ENCODE measurements at regions of chr7 and their contacts with region 1.

Region 1: DNA sequence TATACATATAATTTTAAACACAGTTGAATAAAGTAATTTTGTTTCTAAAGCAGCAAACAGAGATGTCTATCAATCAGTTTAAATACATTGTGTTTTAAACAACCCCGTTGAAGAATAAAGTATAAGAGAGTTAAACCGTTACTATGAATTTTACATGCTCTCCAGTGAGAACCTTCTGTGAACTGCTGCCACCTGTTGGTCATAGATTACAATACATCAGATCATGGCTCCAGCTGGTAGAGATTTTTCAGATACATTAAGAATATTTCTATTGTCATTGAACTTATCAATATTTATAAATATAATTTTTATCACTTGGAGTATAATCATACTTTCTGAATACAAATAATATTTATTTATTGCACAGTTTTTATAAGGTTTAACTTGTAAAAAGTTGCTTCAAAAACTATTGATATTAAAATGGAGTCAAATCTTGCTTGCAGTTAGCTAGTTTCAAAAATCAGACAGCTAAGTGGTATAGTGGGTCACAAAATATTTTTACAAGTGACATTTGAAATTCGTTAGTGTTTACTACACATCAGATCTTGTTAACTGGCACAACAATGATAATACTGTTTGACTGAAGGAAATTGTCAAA is 561.2 kb upstream of the PHF14 start:
- DNase-seq: peak; percentile 16
- ATAC-seq: peak; percentile 54; the same call in 1 of the 2 replicates
- H3K4me3 ChIP-seq: no peak overlapping the region
- H3K27ac ChIP-seq: no peak overlapping the region
- H3K4me1 ChIP-seq: no peaks in the 10 kb centered on the region
- H3K27me3 ChIP-seq: no peaks in the 10 kb centered on the region
- CTCF ChIP-seq: peak; percentile 20 to 54 (median 51); a peak in 4 of 6 replicates
- POLR2A ChIP-seq: no peak
- RAD21 ChIP-seq: peak; percentile 53

Region 2: DNA sequence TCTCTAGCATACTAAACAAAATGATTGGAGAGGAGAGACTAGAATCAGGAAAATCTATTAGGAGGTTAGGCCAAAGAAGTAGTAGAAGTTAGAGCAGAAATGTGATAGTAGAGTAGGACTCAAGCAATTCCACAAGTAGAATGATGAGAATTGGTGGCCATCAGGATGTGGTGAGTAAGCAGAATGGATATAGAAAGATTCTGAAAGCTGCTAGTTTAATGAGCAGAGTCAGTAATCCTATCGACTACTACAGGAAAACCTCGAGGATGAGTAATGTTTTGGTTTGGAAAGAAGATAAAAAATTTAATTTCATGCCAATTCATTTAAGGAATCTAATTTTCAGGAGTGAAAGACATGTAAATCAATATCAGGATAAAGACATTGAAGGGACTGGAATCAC is 87.1 kb before region 1 on chr7:
- CTCF ChIA-PET with region 1: no interaction called
- POLR2A ChIA-PET with region 1: no interaction called
- RAD21 ChIA-PET with region 1: no interaction called
- intact Hi-C with region 1: no loop called
- DNase-seq: no peak
- ATAC-seq: no peak
- H3K4me3 ChIP-seq: no peak overlapping the region
- H3K27ac ChIP-seq: no peak overlapping the region
- H3K4me1 ChIP-seq: no peaks in the 10 kb centered on the region
- H3K27me3 ChIP-seq: no peaks in the 10 kb centered on the region
- CTCF ChIP-seq: no peak
- POLR2A ChIP-seq: no peak
- RAD21 ChIP-seq: no peak

Region 3: DNA sequence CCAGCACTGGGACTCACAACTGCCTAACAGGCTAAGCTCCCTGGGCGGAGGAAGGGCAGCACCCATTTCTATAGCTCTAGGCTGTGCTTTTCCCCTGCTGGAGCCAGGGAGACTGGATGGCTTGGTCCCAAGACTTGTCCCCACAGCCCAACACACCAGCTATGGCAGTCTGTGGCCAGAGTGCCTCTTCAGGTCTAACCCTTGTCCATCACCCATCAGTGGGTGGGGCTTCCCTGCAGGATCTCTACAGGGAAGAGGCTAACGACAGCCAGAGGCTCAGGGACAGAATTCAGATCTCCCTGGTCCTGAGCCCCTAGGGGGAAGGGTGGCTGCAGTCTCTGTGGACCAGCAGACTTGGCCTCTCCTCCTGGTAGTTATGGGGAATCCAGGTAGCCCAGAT is 115.3 kb after region 1 on chr7:
- CTCF ChIA-PET with region 1: no interaction called
- POLR2A ChIA-PET with region 1: no interaction called
- RAD21 ChIA-PET with region 1: no interaction called
- intact Hi-C with region 1: no loop called
- DNase-seq: no peak
- ATAC-seq: no peak
- H3K4me3 ChIP-seq: no peak overlapping the region
- H3K27ac ChIP-seq: no peak overlapping the region
- H3K4me1 ChIP-seq: no peaks in the 10 kb centered on the region
- H3K27me3 ChIP-seq: no peaks in the 10 kb centered on the region
- CTCF ChIP-seq: no peak
- POLR2A ChIP-seq: no peak
- RAD21 ChIP-seq: no peak

Region 4: GRCh38 chr7:11343818-11344413 is 931.4 kb after region 1 on chr7:
- CTCF ChIA-PET with region 1: interaction called, 3 read pairs
- POLR2A ChIA-PET with region 1: no interaction called
- RAD21 ChIA-PET with region 1: no interaction called
- intact Hi-C with region 1: loop called (anchors 10 kb)
- DNase-seq: peak; percentile 22
- ATAC-seq: peak; percentile 54
- H3K4me3 ChIP-seq: no peak overlapping the region
- H3K27ac ChIP-seq: no peak overlapping the region
- H3K4me1 ChIP-seq: no peaks in the 10 kb centered on the region
- H3K27me3 ChIP-seq: no peaks in the 10 kb centered on the region
- CTCF ChIP-seq: peak; percentile 35 to 86 (median 59); a peak in 5 of 6 replicates
- POLR2A ChIP-seq: no peak
- RAD21 ChIP-seq: peak; percentile 76

Measured in HCT116 (cell line).